Esophagus squamous epithelium (tissue), 5 donors: ENCODE measurements at regions of chr10 and their contacts with region 1.

Region 1: GRCh38 chr10:120948889-120949608 is 97.9 kb downstream of the WDR11 start:
- DNase-seq: no peak
- H3K4me3 ChIP-seq: peak overlapping the region in 3 of 4 donors; percentile 28 to 63 (median 41)
- H3K27ac ChIP-seq: no peak overlapping the region
- H3K4me1 ChIP-seq: peaks cover 3 to 44% (median 28%) of the 10 kb centered on the region in 3 donors
- H3K27me3 ChIP-seq: peaks cover 0 to 35% (median 0%) of the 10 kb centered on the region in 4 donors
- CTCF ChIP-seq: peak; percentile 51 to 89 (median 83)
- POLR2A ChIP-seq: no peak

Region 2: GRCh38 chr10:121608469-121609190 is 659.6 kb after region 1 on chr10:
- intact Hi-C with region 1: loop called (anchors 5 kb)
- DNase-seq: no peak
- H3K4me3 ChIP-seq: peak overlapping the region; percentile 12 to 56 (median 34)
- H3K27ac ChIP-seq: peak overlapping the region in 3 of 4 donors; percentile 50 to 62 (median 55)
- H3K4me1 ChIP-seq: peaks cover 0 to 29% (median 8%) of the 10 kb centered on the region in 3 donors
- H3K27me3 ChIP-seq: peaks cover 0 to 31% (median 0%) of the 10 kb centered on the region in 4 donors
- CTCF ChIP-seq: peak; percentile 70 to 97 (median 90)
- POLR2A ChIP-seq: no peak